ENCODE measurements at regions of chr14 and their contacts with region 1.

Region 1: GRCh38 chr14:30443368-30444007 is 115.5 kb upstream of the G2E3 start:
- DNase-seq: peak; percentile 10
- ATAC-seq: no peak
- H3K4me3 ChIP-seq: no peak overlapping the region
- H3K27ac ChIP-seq: no peak overlapping the region
- H3K4me1 ChIP-seq: no peaks in the 10 kb centered on the region
- H3K27me3 ChIP-seq: no peaks in the 10 kb centered on the region
- CTCF ChIP-seq: peak; percentile 50; the same call in 1 of the 2 replicates

Region 2: DNA sequence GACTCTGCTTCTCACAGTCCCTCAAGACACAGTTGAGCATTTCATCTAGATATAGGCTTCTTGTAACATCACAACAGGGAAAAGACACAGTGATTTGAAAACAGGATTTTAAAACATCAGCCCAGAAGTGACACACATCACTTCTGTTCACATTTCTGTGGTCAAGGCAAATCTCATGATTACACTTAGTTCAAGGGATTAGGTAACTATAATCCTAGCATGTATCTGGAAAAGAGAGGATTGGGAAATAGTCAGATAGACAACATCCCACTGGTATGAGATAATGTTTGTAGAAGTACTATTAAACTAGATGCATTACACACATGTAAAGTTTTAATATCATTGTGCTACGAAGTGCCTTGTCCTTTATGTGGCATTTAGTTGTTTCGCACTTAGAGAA is 263.3 kb before region 1 on chr14:
- CTCF ChIA-PET with region 1: no interaction called
- POLR2A ChIA-PET with region 1: no interaction called
- in situ Hi-C with region 1: no loop called
- intact Hi-C with region 1: no loop called
- DNase-seq: no peak
- ATAC-seq: no peak
- H3K4me3 ChIP-seq: no peak overlapping the region
- H3K27ac ChIP-seq: no peak overlapping the region
- H3K4me1 ChIP-seq: no peaks in the 10 kb centered on the region
- H3K27me3 ChIP-seq: no peaks in the 10 kb centered on the region
- CTCF ChIP-seq: no peak

Region 3: GRCh38 chr14:30375296-30375892 is 68.1 kb before region 1 on chr14:
- CTCF ChIA-PET with region 1: no interaction called
- POLR2A ChIA-PET with region 1: no interaction called
- in situ Hi-C with region 1: no loop called
- intact Hi-C with region 1: loop called (anchors 5 kb)
- DNase-seq: no peak
- ATAC-seq: peak; percentile 77; the same call in 1 of the 2 replicates
- H3K4me3 ChIP-seq: no peak overlapping the region
- H3K27ac ChIP-seq: no peak overlapping the region
- H3K4me1 ChIP-seq: no peaks in the 10 kb centered on the region
- H3K27me3 ChIP-seq: no peaks in the 10 kb centered on the region
- CTCF ChIP-seq: peak; percentile 83